Left colon (tissue), 2 donors: ENCODE measurements at regions of chr10 and their contacts with region 1.

Region 1: GRCh38 chr10:30392564-30392990 is 41.4 kb upstream of the MAP3K8 start:
- DNase-seq: peak; percentile 74 to 84
- ATAC-seq: peak; percentile 100

Region 2: GRCh38 chr10:30309401-30309800 is 83.2 kb before region 1 on chr10:
- intact Hi-C with region 1: no loop called
- DNase-seq: no peak
- ATAC-seq: no peak

Region 3: GRCh38 chr10:30447125-30447799 is 54.7 kb after region 1 on chr10:
- intact Hi-C with region 1: no loop called
- DNase-seq: no peak
- ATAC-seq: no peak

Region 4: GRCh38 chr10:30591249-30591670 is 198.7 kb after region 1 on chr10:
- intact Hi-C with region 1: loop called in 1 of 2 experiments (anchors 5 kb)
- DNase-seq: no peak
- ATAC-seq: peak; percentile 67